ENCODE measurements at regions of chr16 and their contacts with region 1.

Region 1: GRCh38 chr16:57984331-57985203 is 13.6 kb upstream of the CNGB1 start:
- DNase-seq: peak; percentile 93 to 96
- H3K4me3 ChIP-seq: peak overlapping the region; percentile 60 to 80 (median 72)
- H3K27ac ChIP-seq: no peak overlapping the region
- H3K4me1 ChIP-seq: peaks cover 0 to 11% (median 3%) of the 10 kb centered on the region in 4 experiments; a peak in 3 of 7 replicates
- H3K27me3 ChIP-seq: peaks cover 2 to 33% (median 19%) of the 10 kb centered on the region in 4 experiments
- CTCF ChIP-seq: no peak
- EP300 ChIP-seq: no peak
- POLR2A ChIP-seq: no peak
- RAD21 ChIP-seq: no peak

Region 2: DNA sequence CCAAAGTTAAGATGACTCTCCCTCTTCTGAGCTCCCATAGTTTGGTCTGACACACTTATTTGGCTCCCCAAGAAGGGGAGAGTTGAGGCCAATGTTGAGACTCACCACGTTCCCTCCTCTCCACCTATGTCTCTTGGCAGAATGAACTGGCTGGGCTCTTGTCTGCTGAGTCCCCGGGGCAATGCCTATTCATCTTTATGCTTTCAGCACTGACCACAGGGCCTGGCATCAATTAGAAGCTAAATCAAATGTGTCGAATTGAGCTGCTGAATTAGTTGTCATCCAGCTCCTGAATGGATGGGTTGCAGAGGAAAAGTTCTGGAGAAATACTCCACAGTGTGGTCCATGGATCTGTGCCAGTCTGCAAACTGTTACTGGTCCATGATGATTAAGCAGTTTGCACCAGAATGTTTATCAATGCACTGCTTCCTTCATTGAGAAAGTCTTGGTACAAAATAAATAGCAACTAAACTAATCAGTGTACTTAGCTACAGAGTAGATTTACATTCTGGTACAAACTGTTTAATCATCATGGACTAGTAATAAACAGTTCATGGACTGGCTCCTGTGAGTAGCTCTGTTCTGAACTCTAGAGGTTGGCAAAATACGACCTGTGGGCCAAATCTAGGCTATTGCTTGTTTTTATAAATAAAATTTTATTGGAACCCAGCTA is 18.3 kb before region 1 on chr16:
- CTCF ChIA-PET with region 1: interaction called, 10 read pairs
- POLR2A ChIA-PET with region 1: interaction called, 4 read pairs
- DNase-seq: no peak
- H3K4me3 ChIP-seq: no peak overlapping the region
- H3K27ac ChIP-seq: no peak overlapping the region
- H3K4me1 ChIP-seq: no peaks in the 10 kb centered on the region
- H3K27me3 ChIP-seq: no peaks in the 10 kb centered on the region
- CTCF ChIP-seq: no peak
- EP300 ChIP-seq: no peak
- POLR2A ChIP-seq: no peak
- RAD21 ChIP-seq: no peak

Region 3: DNA sequence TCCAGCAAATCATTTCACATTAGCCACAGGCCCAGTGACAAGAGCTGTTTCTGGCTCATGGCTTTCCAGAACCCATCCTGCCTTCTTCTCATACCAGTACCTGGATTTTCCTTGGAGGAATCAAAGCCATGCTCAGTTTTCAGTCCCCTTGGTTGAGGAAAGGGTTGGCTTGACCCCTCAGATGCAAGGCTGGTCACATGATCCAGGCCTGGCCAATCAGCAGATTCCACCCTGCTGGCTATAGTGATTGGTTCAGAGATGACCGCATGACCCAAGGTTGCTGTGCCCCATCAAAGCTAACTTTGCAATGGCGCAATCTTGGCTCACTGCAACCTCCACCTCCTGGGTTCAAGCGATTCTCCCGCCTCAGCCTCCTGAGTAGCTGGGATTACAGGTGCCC is 86.0 kb after region 1 on chr16:
- CTCF ChIA-PET with region 1: no interaction called
- POLR2A ChIA-PET with region 1: no interaction called
- DNase-seq: no peak
- H3K4me3 ChIP-seq: no peak overlapping the region
- H3K27ac ChIP-seq: no peak overlapping the region
- H3K4me1 ChIP-seq: no peaks in the 10 kb centered on the region
- H3K27me3 ChIP-seq: no peaks in the 10 kb centered on the region
- CTCF ChIP-seq: no peak
- EP300 ChIP-seq: no peak
- POLR2A ChIP-seq: no peak
- RAD21 ChIP-seq: no peak

Region 4: DNA sequence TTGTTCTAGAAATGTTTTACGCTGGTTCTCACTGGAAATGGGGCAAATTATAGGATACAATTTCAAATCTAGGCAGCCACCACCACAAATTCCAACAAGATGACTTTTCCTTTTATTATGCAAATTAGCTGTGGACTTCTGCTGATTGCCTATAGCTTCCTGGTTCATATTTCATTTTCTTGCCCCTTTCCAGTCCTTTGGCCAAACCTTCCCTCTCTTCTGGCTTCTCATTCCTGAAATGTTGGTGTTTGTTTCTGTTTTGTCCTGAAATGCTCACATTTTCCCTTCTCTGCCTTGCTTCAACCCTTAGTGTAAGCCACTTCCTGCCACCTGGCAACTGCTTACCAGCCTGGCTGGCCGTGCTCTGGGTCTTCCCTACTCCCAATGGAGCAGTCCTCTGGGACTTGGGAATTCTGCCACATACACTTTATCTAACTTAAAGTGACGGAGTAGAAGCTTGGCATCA is 296.3 kb after region 1 on chr16:
- CTCF ChIA-PET with region 1: no interaction called
- POLR2A ChIA-PET with region 1: no interaction called
- DNase-seq: no peak
- H3K4me3 ChIP-seq: no peak overlapping the region
- H3K27ac ChIP-seq: no peak overlapping the region
- H3K4me1 ChIP-seq: peaks cover 2 to 7% (median 5%) of the 10 kb centered on the region in 4 experiments; a peak in 6 of 7 replicates
- H3K27me3 ChIP-seq: no peaks in the 10 kb centered on the region
- CTCF ChIP-seq: no peak
- EP300 ChIP-seq: no peak
- POLR2A ChIP-seq: no peak
- RAD21 ChIP-seq: no peak